Heart right ventricle (tissue), 16 donors: ENCODE measurements at regions of chr2 and their contacts with region 1.

Region 1: GRCh38 chr2:198296665-198297308 is 492.4 kb downstream of the PLCL1 start:
- DNase-seq: peak in 1 of 2 donors; percentile 32
- ATAC-seq: peak in 7 of 8 donors; percentile 72 to 88 (median 76)
- H3K4me3 ChIP-seq: no peak overlapping the region
- H3K27ac ChIP-seq: no peak overlapping the region
- H3K4me1 ChIP-seq: peaks cover 0 to 6% (median 0%) of the 10 kb centered on the region in 9 donors
- H3K27me3 ChIP-seq: peaks cover 0 to 11% (median 0%) of the 10 kb centered on the region in 7 donors
- CTCF ChIP-seq: peak; percentile 62 to 89 (median 88)

Region 2: DNA sequence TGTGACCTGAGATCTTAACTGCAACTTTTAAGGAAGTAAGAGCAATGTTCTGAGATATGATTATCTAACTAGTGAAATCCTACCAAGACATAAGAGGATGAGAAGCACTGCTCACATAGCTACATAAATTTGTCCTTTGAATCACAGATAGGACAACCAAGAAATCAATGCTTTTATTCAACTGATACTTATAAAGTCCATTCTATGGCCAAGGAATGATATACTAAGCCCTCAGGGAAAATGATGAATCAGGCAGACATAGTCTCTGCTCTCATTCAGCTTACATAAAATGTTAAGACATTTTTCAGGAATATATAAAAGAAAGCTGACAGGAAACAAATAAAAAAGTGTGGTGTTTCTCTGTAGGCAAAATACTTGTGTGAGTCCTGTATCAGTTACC is 1409.4 kb before region 1 on chr2:
- intact Hi-C with region 1: no loop called
- DNase-seq: no peak
- ATAC-seq: no peak
- H3K4me3 ChIP-seq: no peak overlapping the region
- H3K27ac ChIP-seq: no peak overlapping the region
- H3K4me1 ChIP-seq: no peaks in the 10 kb centered on the region
- H3K27me3 ChIP-seq: no peaks in the 10 kb centered on the region
- CTCF ChIP-seq: no peak

Region 3: GRCh38 chr2:197705121-197705911 is 591.5 kb before region 1 on chr2 and contains the start of gene MARS2:
- intact Hi-C with region 1: loop called in 7 of 10 experiments (anchors 5 to 10 kb)
- DNase-seq: peak; percentile 92 to 96
- ATAC-seq: peak; percentile 94 to 99 (median 98)
- H3K4me3 ChIP-seq: peak within 1 kb of the TSS; percentile 59 to 99 (median 92)
- H3K27ac ChIP-seq: peak within 1 kb of the TSS; percentile 43 to 91 (median 85)
- H3K4me1 ChIP-seq: peaks cover 2 to 47% (median 40%) of the 10 kb centered on the region in 9 donors
- H3K27me3 ChIP-seq: no peaks in the 10 kb centered on the region
- CTCF ChIP-seq: peak in 2 of 9 donors; percentile 8 to 19
- total RNA-seq, gene MARS2: 5.0 to 11.5 (median 7.7) TPM

Region 4: GRCh38 chr2:197710424-197711042 is 586.3 kb before region 1 on chr2:
- intact Hi-C with region 1: loop called in 7 of 10 experiments (anchors 5 to 10 kb)
- DNase-seq: no peak
- ATAC-seq: no peak
- H3K4me3 ChIP-seq: no peak overlapping the region
- H3K27ac ChIP-seq: no peak overlapping the region
- H3K4me1 ChIP-seq: peaks cover 2 to 44% (median 40%) of the 10 kb centered on the region in 9 donors
- H3K27me3 ChIP-seq: no peaks in the 10 kb centered on the region
- CTCF ChIP-seq: no peak

Region 5: DNA sequence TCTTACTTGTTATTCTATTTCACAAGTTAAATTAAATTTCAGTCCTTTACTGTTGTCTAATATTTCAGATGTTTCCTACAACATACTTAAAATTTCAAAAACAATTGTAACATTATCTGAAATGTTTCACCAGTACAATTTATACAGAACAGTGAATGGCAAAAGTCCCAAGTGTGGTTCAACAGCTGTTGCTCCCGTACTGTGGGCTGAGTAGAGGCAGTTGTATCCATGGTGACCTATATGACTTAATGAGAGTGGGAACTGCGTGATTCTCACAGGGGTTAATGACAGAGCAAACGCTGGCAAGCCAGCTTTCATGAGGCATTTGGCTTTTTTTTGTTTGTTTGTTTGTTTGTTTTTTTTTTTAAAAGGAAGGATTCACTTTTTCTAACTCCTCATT is 497.7 kb before region 1 on chr2:
- intact Hi-C with region 1: loop called (anchors 1 to 10 kb)
- DNase-seq: no peak
- ATAC-seq: no peak
- H3K4me3 ChIP-seq: no peak overlapping the region
- H3K27ac ChIP-seq: no peak overlapping the region
- H3K4me1 ChIP-seq: peaks cover 0 to 42% (median 21%) of the 10 kb centered on the region in 9 donors
- H3K27me3 ChIP-seq: peaks cover 0 to 30% (median 0%) of the 10 kb centered on the region in 7 donors
- CTCF ChIP-seq: no peak

Region 6: DNA sequence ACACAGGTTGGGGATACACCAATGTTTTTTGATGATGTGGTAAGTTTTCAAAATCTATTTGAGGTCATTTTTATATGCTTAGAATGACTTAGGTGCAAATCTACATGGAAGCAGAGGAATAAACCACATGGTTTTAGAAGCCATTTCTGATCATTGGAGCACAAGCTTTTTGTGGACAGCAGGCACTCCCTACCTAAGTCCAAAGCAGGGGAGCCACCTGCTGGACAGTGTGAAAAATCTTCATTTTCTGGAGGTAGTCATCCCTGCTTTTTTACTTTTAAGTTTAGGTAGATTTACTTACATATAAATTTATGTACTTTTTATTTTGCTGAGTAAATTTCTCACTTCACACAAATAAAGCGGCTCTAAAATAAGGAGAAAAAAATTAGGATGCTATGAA is 169.2 kb before region 1 on chr2:
- intact Hi-C with region 1: loop called in 4 of 10 experiments (anchors 5 to 10 kb)
- DNase-seq: peak; percentile 22 to 23
- ATAC-seq: peak in 7 of 8 donors; percentile 55 to 86 (median 79)
- H3K4me3 ChIP-seq: no peak overlapping the region
- H3K27ac ChIP-seq: no peak overlapping the region
- H3K4me1 ChIP-seq: peaks cover 0 to 35% (median 5%) of the 10 kb centered on the region in 9 donors
- H3K27me3 ChIP-seq: no peaks in the 10 kb centered on the region
- CTCF ChIP-seq: peak; percentile 37 to 78 (median 73)

Region 7: GRCh38 chr2:198135481-198135934 is 161.3 kb before region 1 on chr2:
- intact Hi-C with region 1: loop called in 3 of 10 experiments (anchors 5 to 10 kb)
- DNase-seq: no peak
- ATAC-seq: no peak
- H3K4me3 ChIP-seq: no peak overlapping the region
- H3K27ac ChIP-seq: no peak overlapping the region
- H3K4me1 ChIP-seq: peaks cover 0 to 24% (median 8%) of the 10 kb centered on the region in 9 donors
- H3K27me3 ChIP-seq: no peaks in the 10 kb centered on the region
- CTCF ChIP-seq: no peak

Region 8: GRCh38 chr2:198144660-198145059 is 152.1 kb before region 1 on chr2:
- intact Hi-C with region 1: loop called in 2 of 10 experiments (anchors 10 kb)
- DNase-seq: no peak
- ATAC-seq: peak in 5 of 8 donors; percentile 16 to 44 (median 25)
- H3K4me3 ChIP-seq: no peak overlapping the region
- H3K27ac ChIP-seq: no peak overlapping the region
- H3K4me1 ChIP-seq: peaks cover 0 to 19% (median 5%) of the 10 kb centered on the region in 9 donors
- H3K27me3 ChIP-seq: no peaks in the 10 kb centered on the region
- CTCF ChIP-seq: no peak

Region 9: GRCh38 chr2:198322294-198322693 is 25.5 kb after region 1 on chr2:
- intact Hi-C with region 1: no loop called
- DNase-seq: no peak
- ATAC-seq: no peak
- H3K4me3 ChIP-seq: no peak overlapping the region
- H3K27ac ChIP-seq: no peak overlapping the region
- H3K4me1 ChIP-seq: no peaks in the 10 kb centered on the region
- H3K27me3 ChIP-seq: peaks cover 0 to 66% (median 42%) of the 10 kb centered on the region in 7 donors
- CTCF ChIP-seq: peak in 1 of 9 donors; percentile 26